ENCODE measurements at regions of chr19 and their contacts with region 1.

Region 1: GRCh38 chr19:36054119-36054732 is at the start of gene THAP8:
- DNase-seq: peak; percentile 100
- H3K4me3 Mint-ChIP-seq: peak within 1 kb of the TSS; percentile 98
- H3K27ac Mint-ChIP-seq: peak within 1 kb of the TSS; percentile 98
- H3K4me1 Mint-ChIP-seq: peaks cover 18% of the 10 kb centered on the region
- H3K27me3 Mint-ChIP-seq: no peaks in the 10 kb centered on the region
- total RNA-seq, gene THAP8: 2.1 to 2.2 TPM

Region 2: GRCh38 chr19:35648017-35648961 is 405.9 kb before region 1 on chr19 and contains the start of gene COX6B1:
- CTCF ChIA-PET with region 1: no interaction called
- POLR2A ChIA-PET with region 1: no interaction called
- intact Hi-C with region 1: loop called (anchors 1 kb)
- DNase-seq: peak; percentile 96
- H3K4me3 Mint-ChIP-seq: peak within 1 kb of the TSS; percentile 97
- H3K27ac Mint-ChIP-seq: peak within 1 kb of the TSS; percentile 85
- H3K4me1 Mint-ChIP-seq: peaks cover 37% of the 10 kb centered on the region
- H3K27me3 Mint-ChIP-seq: no peaks in the 10 kb centered on the region
- total RNA-seq, gene COX6B1: 444 to 453 TPM

Region 3: GRCh38 chr19:35903550-35904179 is 150.6 kb before region 1 on chr19:
- CTCF ChIA-PET with region 1: no interaction called
- POLR2A ChIA-PET with region 1: no interaction called
- intact Hi-C with region 1: no loop called
- DNase-seq: peak; percentile 94
- H3K4me3 Mint-ChIP-seq: peak overlapping the region; percentile 82
- H3K27ac Mint-ChIP-seq: peak overlapping the region; percentile 90
- H3K4me1 Mint-ChIP-seq: peaks cover 44% of the 10 kb centered on the region
- H3K27me3 Mint-ChIP-seq: no peaks in the 10 kb centered on the region

Region 4: GRCh38 chr19:35995048-35995993 is 58.9 kb before region 1 on chr19 and contains the start of gene SDHAF1:
- CTCF ChIA-PET with region 1: no interaction called
- POLR2A ChIA-PET with region 1: interaction called, 4 read pairs
- intact Hi-C with region 1: loop called (anchors 1 kb)
- DNase-seq: peak; percentile 97
- H3K4me3 Mint-ChIP-seq: peak within 1 kb of the TSS; percentile 93
- H3K27ac Mint-ChIP-seq: peak within 1 kb of the TSS; percentile 89
- H3K4me1 Mint-ChIP-seq: peaks cover 38% of the 10 kb centered on the region
- H3K27me3 Mint-ChIP-seq: no peaks in the 10 kb centered on the region
- total RNA-seq, gene SDHAF1: 15.8 to 18.9 TPM

Region 5: DNA sequence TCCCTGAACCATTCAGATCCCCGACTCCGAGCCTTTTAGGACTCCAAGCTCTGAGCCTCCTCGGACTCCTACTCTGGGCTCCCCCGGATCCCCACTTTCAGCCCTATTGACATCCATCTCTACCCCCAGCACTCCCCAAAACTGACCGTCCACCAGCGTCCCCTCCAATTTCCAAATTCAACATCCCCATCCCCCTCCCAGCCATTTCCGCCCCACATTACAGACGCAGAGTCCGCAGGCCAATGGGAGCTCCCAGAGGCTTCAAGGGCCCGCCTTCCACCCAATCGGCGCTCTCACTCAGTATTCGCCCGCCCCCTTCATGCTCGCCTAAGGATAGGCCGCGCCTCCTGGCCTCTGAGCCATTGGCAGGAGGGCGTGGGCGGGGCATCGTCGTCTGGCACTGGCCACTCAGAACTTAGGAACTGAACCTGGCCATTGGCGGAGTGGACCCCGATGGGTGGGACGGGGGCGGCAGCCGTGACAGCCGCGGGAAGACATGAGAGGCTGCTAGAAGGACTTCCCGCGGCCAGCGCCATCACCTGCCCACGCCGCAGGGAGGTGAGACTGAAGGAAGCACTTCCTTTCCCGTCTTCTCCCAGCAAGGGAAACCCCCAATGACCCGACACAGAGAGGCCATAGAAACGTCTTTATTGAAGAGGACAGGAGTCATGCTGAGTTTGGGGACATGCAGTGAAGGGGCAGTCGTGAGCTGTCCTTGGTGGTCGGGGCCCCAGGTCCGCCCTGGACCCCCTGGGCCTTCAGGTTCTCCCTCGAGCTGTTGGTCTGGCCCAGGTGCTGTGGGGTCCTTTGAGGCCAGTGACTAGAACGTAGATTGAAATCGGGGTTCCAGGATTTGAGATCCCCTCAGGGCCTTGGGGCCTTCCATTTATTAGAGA is 39.9 kb before region 1 on chr19 and contains the start of gene ALKBH6:
- CTCF ChIA-PET with region 1: no interaction called
- POLR2A ChIA-PET with region 1: interaction called, 6 read pairs
- intact Hi-C with region 1: loop called (anchors 1 kb)
- DNase-seq: peak; percentile 100
- H3K4me3 Mint-ChIP-seq: peak within 1 kb of the TSS; percentile 99
- H3K27ac Mint-ChIP-seq: peak within 1 kb of the TSS; percentile 95
- H3K4me1 Mint-ChIP-seq: peaks cover 36% of the 10 kb centered on the region
- H3K27me3 Mint-ChIP-seq: no peaks in the 10 kb centered on the region
- total RNA-seq, gene ALKBH6: 40.9 to 44.7 TPM

Region 6: GRCh38 chr19:36093146-36093662 is 39.0 kb after region 1 on chr19:
- CTCF ChIA-PET with region 1: no interaction called
- POLR2A ChIA-PET with region 1: no interaction called
- intact Hi-C with region 1: loop called (anchors 2 kb)
- DNase-seq: peak; percentile 59
- H3K4me3 Mint-ChIP-seq: no peak overlapping the region
- H3K27ac Mint-ChIP-seq: peak overlapping the region; percentile 49
- H3K4me1 Mint-ChIP-seq: peaks cover 16% of the 10 kb centered on the region
- H3K27me3 Mint-ChIP-seq: no peaks in the 10 kb centered on the region

Region 7: DNA sequence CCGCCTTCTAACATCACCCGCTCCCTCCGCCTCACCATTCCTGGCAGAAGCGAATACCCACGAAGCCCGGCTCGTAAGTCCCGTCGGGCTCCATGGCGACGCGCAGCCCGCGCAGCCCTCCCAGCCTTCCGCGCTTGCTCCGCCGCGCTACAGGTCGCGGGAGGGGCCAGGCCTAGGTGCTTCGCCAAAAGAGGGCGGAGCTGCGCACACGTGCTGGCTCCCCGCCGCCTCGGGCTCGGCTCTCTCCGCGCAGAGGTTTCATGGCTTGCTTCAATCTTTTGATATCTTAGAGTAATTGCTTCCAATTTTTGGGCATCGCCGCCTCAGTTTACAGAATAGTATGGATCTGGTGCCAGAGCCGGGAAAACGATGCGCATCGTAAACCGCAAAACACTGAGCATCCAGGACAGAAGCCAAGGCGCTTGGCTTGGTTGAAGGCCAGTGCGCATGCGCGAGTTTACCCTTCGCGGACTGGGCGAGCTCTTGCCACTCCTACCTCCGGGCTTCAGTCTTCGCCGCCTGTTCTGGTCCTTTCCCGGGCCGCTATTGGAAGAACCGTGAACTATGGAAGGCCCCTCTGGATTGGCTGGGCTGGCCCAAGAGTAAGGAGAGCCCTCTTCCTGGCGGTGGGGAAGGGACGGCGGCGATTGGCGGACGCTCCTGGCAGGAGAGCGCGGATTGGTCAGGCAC is 60.7 kb after region 1 on chr19 and contains the start of gene POLR2I:
- CTCF ChIA-PET with region 1: interaction called, 3 read pairs
- POLR2A ChIA-PET with region 1: interaction called, 3 read pairs
- intact Hi-C with region 1: loop called (anchors 1 kb)
- DNase-seq: peak; percentile 99
- H3K4me3 Mint-ChIP-seq: peak within 1 kb of the TSS; percentile 99
- H3K27ac Mint-ChIP-seq: peak within 1 kb of the TSS; percentile 94
- H3K4me1 Mint-ChIP-seq: peaks cover 36% of the 10 kb centered on the region
- H3K27me3 Mint-ChIP-seq: peaks cover 5% of the 10 kb centered on the region
- total RNA-seq, gene POLR2I: 84.1 to 84.8 TPM

Region 8: GRCh38 chr19:36169084-36169760 is 115.0 kb after region 1 on chr19:
- CTCF ChIA-PET with region 1: no interaction called
- POLR2A ChIA-PET with region 1: no interaction called
- intact Hi-C with region 1: loop called (anchors 5 kb)
- DNase-seq: no peak
- H3K4me3 Mint-ChIP-seq: no peak overlapping the region
- H3K27ac Mint-ChIP-seq: no peak overlapping the region
- H3K4me1 Mint-ChIP-seq: peaks cover 3% of the 10 kb centered on the region
- H3K27me3 Mint-ChIP-seq: no peaks in the 10 kb centered on the region